T-cell (primary cell): ENCODE measurements at regions of chr12 and their contacts with region 1.

Region 1: DNA sequence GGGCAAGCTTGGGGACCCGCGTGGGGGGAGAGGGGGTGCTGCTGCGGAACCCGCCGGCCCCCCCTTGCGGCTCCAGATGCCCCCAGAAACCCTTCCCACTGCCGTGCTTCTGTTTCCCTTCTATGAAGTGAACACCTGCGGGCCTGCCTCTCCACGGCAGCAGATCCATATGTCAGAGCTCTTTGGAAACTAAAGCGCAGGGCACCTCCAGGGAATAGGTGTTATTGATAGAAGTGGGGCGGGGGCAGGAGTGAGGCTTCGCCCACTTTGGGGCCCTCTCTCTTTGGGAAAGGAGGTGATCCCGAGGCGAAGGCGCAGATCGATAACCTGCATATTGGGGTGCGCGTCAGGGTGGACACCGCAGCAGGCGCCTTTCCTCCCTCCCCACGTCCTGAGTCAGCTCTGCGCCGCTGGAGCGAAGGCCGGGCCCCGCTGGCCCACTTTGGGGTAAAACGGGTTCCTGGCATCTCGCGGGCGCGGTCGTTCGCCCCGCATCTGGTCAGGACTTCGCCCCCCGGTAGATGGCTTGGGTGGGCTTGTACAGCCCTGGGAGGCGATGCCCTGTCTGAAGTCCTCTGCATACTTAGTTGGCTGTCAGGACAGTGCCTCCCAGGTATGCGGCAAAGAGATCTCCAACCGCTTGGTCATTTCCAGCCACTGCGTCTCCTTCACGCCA is 524 bp downstream of the KMT5A start:
- DNase-seq: peak in 3 of 35 experiments; percentile 6 to 37 (median 11)
- ATAC-seq: peak in 3 of 4 experiments; percentile 8 to 9 (median 8)
- H3K4me3 ChIP-seq: peak overlapping the region; percentile 77 to 78
- H3K4me3 Mint-ChIP-seq: peak overlapping the region; percentile 87 to 96 (median 89)
- H3K27ac ChIP-seq: peak overlapping the region; percentile 25
- H3K27ac Mint-ChIP-seq: peak overlapping the region in 1 of 2 donors; percentile 61
- H3K4me1 ChIP-seq: peaks cover 15 to 28% of the 10 kb centered on the region in 2 experiments
- H3K4me1 Mint-ChIP-seq: peaks cover 19 to 25% (median 25%) of the 10 kb centered on the region in 3 donors
- H3K27me3 ChIP-seq: no peaks in the 10 kb centered on the region
- H3K27me3 Mint-ChIP-seq: no peaks in the 10 kb centered on the region

Region 2: DNA sequence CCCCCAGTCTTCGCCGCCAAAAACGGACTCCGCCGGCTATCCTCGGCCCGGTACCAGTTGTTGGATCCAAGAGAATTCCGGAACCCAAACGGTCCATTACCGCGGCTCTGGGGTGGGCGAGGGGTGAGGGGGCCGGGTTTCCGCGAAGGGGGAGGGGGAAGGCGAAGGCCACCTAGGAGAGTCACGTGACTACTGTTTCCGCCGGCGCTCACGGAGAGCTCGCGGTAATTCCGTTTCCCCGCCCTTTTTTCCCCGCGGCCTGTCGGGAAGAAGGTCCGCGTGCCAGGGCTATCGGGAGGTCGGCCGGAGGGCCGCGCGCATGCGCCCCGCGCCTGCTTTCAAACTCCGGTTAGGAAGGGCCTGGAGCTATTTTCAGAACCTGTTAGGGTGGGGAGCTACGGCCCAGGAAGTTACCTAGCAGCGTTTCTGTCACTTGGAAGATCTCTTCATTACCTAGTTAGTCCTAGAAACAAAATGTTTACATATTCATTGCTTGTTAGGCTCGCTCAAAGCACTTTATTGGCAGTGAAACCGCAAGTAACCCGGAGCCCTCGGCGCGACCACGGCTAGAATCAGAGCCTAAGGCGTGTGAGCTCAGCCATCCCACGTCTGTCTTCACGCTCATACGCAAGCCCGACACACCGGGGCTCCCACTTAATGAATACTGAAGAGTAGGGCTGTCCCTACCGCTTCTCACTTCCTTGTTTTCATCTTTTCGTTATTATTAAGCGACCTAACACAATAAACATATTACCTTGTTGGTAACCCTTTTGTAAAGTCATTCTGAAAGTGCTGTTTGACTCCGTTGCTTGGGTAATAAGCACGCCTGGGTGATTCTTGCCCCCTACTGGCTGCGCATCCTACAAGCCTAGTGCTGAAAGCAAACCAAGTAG is 19.2 kb before region 1 on chr12:
- CTCF ChIA-PET with region 1: interaction called, 3 to 14 read pairs
- POLR2A ChIA-PET with region 1: interaction called in 1 of 2 experiments, 4 read pairs
- DNase-seq: peak; percentile 92 to 99 (median 97)
- ATAC-seq: peak; percentile 83 to 84 (median 83)
- H3K4me3 ChIP-seq: peak overlapping the region; percentile 87 to 89
- H3K4me3 Mint-ChIP-seq: peak overlapping the region; percentile 84 to 90 (median 86)
- H3K27ac ChIP-seq: peak overlapping the region; percentile 93
- H3K27ac Mint-ChIP-seq: peak overlapping the region; percentile 97
- H3K4me1 ChIP-seq: peaks cover 10 to 39% of the 10 kb centered on the region in 2 experiments
- H3K4me1 Mint-ChIP-seq: peaks cover 23 to 31% (median 29%) of the 10 kb centered on the region in 3 donors
- H3K27me3 ChIP-seq: no peaks in the 10 kb centered on the region
- H3K27me3 Mint-ChIP-seq: no peaks in the 10 kb centered on the region

Region 3: DNA sequence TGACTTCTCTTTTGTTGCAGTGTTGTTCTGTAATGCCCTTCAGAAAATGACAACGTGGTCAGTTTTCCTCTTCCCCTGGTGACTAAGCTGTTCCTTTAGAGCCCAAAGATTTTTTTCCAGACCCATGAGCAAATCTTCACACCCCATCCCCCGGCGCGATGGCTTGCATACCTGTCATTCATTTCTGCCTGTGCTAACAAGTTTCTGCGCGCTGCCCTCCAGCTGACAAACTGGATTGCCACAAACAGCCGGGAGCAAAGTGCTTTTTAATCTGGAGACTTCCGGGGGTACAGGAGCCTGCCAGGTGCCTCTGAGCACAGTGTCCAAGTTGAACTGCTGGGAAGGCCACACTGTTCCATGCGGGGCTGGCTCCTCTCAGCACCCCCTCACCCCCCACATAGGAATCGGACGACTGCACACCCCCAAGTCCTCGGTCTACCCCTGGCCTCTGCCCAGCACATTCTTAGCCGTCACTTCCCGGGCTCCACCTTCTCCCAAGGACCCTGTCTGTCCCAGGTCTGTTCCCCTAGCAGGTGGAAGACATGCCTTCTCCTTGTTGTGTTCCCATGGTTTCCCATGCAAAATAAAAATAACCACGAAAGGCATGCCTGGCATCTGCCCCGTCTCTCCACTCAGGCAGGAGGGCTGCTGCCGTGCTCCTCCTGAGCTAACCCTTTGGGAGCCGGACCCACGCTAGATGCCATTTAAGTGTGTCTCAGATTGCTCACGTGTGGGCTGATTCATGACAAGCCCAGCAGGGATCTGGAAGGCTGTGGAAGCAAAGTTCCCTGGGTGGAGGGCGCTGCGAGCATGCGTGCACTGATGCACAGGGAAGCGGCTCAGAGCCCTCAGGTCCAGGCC is 134.9 kb after region 1 on chr12:
- CTCF ChIA-PET with region 1: interaction called in 1 of 2 experiments, 10 read pairs
- POLR2A ChIA-PET with region 1: no interaction called
- DNase-seq: no peak
- ATAC-seq: no peak
- H3K4me3 ChIP-seq: no peak overlapping the region
- H3K4me3 Mint-ChIP-seq: no peak overlapping the region
- H3K27ac ChIP-seq: no peak overlapping the region
- H3K27ac Mint-ChIP-seq: no peak overlapping the region
- H3K4me1 ChIP-seq: no peaks in the 10 kb centered on the region
- H3K4me1 Mint-ChIP-seq: no peaks in the 10 kb centered on the region
- H3K27me3 ChIP-seq: no peaks in the 10 kb centered on the region
- H3K27me3 Mint-ChIP-seq: no peaks in the 10 kb centered on the region